Common myeloid progenitor, CD34-positive (primary cell): ENCODE measurements at regions of chr3 and their contacts with region 1.

Region 1: DNA sequence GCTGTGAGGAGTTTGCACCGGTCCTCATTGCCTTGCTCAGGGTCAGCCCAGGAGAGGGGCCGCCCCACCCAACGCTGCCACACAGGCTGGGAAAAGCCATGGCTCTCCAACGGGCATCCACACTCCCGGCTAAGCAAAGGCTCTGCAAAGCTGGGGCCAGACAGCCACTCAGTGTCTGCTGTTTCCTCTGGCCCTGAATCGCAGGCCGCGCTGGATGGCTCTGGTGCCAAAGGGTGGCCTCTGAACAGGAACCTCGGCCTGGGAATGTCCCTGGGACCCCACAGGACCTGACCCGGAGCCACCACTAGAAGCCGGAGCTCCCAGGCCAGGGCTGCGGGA is 42.9 kb downstream of the RPN1 start:
- DNase-seq: no peak
- H3K4me3 ChIP-seq: peak overlapping the region; percentile 23 to 76 (median 54)
- H3K27ac ChIP-seq: no peak overlapping the region
- H3K4me1 ChIP-seq: peaks cover 7 to 63% (median 29%) of the 10 kb centered on the region in 4 experiments
- H3K27me3 ChIP-seq: no peaks in the 10 kb centered on the region

Region 2: DNA sequence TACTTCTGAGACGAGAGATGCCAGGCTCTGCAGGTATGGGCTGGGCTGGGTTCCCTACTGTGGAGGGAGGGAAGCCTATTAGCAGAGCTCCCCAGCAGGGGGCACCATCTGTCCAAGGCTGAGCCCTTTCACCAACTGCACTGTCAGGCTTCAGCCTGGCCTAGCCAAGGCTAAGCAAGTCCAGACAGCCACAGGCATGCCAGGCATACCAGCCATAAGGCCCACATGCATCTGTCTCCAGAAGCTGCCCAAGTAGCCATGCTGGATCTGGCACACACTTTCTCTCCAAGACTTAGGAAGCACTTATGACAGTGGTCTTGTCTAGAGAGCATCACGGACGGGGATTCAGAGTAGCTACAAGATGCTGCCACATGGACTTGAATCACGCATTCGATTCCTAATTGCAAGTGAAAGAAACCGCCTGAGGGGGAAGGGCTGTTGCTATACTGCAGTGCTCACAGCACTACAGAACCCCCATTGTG is 512.4 kb before region 1 on chr3:
- CTCF ChIA-PET with region 1: interaction called, 19 read pairs
- POLR2A ChIA-PET with region 1: no interaction called
- DNase-seq: peak; percentile 71 to 83 (median 76)
- H3K4me3 ChIP-seq: no peak overlapping the region
- H3K27ac ChIP-seq: no peak overlapping the region
- H3K4me1 ChIP-seq: peaks cover 0 to 3% (median 0%) of the 10 kb centered on the region in 4 experiments
- H3K27me3 ChIP-seq: no peaks in the 10 kb centered on the region

Region 3: DNA sequence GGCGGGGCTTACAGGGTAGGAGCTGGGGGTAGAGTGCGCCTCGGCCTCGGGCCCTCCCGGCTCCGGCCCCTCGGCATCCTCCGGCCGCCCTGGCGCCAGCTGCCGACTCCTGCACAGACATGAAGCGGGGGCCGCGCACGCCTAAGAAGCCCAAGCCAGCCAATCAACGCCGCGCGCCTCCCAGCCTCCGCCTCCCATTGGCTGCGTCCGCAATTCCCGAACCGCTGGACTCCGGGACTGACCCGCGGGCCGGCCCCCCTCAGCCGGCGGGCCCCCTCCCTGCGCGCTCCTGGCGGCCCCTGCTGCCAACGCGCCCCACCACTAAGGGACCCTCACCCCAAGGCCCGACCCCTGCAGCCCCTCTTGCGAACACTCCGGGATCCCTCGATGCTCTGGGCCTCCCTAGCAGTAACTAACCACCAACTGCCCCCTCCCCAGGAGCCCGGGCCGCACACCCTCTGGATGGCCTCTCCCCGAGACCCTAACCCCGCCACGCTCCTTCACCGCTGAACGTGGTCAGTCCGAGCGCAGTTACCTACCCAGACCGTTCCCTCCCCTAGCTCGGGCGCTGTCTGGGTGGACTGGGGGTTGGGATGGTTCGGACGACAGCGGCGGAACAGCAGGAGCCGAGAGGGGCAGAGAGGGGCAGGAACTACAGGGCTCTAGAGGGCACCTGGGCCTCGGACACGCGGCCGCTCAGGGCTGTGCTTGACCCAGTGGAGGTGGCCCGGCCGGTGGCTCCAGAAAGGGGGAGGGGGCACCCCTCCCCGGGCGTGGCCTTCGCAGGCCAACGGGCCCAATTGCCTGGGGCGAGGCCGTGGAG is 119.7 kb before region 1 on chr3:
- CTCF ChIA-PET with region 1: interaction called, 34 read pairs
- POLR2A ChIA-PET with region 1: interaction called, 5 read pairs
- DNase-seq: peak; percentile 66 to 79 (median 70)
- H3K4me3 ChIP-seq: peak overlapping the region; percentile 70 to 98 (median 87)
- H3K27ac ChIP-seq: peak overlapping the region; percentile 81 to 93
- H3K4me1 ChIP-seq: peaks cover 3 to 95% (median 71%) of the 10 kb centered on the region in 4 experiments
- H3K27me3 ChIP-seq: peaks cover 0 to 11% (median 0%) of the 10 kb centered on the region in 5 experiments

Region 4: GRCh38 chr3:128617557-128618397 is 10.1 kb after region 1 on chr3:
- CTCF ChIA-PET with region 1: interaction called, 55 read pairs
- POLR2A ChIA-PET with region 1: interaction called, 16 read pairs
- DNase-seq: peak; percentile 97 to 99 (median 98)
- H3K4me3 ChIP-seq: peak overlapping the region; percentile 74 to 89 (median 85)
- H3K27ac ChIP-seq: peak overlapping the region; percentile 85 to 88
- H3K4me1 ChIP-seq: peaks cover 5 to 75% (median 52%) of the 10 kb centered on the region in 4 experiments
- H3K27me3 ChIP-seq: no peaks in the 10 kb centered on the region

Region 5: GRCh38 chr3:128680602-128681368 is 73.1 kb after region 1 on chr3:
- CTCF ChIA-PET with region 1: no interaction called
- POLR2A ChIA-PET with region 1: no interaction called
- DNase-seq: peak; percentile 97 to 99 (median 98)
- H3K4me3 ChIP-seq: peak overlapping the region; percentile 58 to 90 (median 69)
- H3K27ac ChIP-seq: peak overlapping the region; percentile 80 to 92
- H3K4me1 ChIP-seq: peaks cover 14 to 66% (median 42%) of the 10 kb centered on the region in 4 experiments
- H3K27me3 ChIP-seq: no peaks in the 10 kb centered on the region